A673 (cell line): ENCODE measurements at regions of chr2 and their contacts with region 1.

Region 1: DNA sequence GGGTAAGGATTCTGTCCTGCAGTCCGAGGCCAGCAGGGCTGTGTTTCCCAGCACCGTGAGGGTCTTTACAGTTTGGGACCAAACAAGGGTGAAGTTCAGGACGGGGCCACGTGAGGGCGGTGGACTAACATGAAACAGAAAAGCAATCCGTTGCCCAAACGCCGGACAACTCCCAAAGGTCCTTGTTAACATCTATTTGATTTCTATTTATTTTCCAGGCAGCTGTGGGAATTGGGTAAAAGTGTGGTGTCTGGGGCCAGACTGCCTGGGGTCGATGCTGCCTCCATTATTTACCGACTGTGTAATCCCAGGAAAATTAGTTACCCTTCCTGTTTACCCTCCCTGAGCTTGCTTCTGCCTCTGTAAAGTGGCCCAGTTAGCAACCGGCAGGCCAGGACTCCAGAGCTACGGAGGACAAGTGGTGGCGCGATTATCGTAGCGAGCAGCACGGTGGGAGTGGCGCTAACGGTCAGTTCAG is 66.3 kb upstream of the TCF7L1 start:
- DNase-seq: peak; percentile 82
- H3K4me3 ChIP-seq: peak overlapping the region; percentile 14
- H3K27ac ChIP-seq: no peak overlapping the region
- H3K4me1 ChIP-seq: no peaks in the 10 kb centered on the region
- H3K27me3 ChIP-seq: no peaks in the 10 kb centered on the region
- CTCF ChIP-seq: peak; percentile 79

Region 2: DNA sequence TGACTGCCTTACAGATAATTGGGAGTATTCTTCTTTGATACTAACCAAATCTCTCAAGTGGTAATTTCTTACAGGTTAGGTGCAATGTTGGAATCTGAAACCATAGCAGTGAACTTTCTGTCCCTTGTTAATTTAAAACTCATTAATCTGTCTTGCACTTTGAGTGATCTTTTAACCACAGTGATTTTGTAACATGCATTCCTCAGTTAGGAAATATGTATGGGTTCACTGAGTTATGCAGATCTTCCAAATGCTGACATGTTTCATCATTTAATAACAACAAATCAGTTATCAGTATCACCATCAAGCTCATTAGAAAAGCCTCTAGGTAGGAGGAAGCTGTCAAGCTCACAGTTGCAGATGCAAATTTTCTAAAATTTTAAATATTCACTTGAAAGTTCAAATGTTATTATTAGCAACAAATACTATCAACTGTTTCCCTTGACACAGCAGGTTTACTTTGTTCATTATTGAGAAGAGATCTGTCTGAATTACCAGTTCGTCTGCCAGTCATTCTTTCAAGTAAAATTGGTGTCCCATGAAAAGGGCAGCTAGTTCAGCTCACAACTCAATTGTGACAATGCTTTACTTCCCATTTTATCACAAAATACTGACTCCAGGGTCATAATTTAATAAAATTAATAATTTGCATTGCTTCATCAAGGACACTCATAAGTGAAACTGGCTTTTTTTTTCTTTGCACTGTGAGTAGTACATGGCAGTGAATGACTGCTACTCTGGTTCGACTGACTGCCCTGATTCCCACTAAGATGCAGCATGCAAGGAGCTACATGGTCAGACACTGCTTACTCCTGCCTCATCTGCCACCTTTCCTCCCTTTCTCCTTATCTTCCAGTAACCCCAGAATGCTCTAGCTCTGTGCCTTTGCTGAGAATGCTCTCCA is 639.4 kb before region 1 on chr2:
- CTCF ChIA-PET with region 1: no interaction called
- POLR2A ChIA-PET with region 1: no interaction called
- intact Hi-C with region 1: no loop called
- DNase-seq: no peak
- H3K4me3 ChIP-seq: no peak overlapping the region
- H3K27ac ChIP-seq: no peak overlapping the region
- H3K4me1 ChIP-seq: no peaks in the 10 kb centered on the region
- H3K27me3 ChIP-seq: no peaks in the 10 kb centered on the region
- CTCF ChIP-seq: no peak

Region 3: GRCh38 chr2:85288244-85288725 is 221.4 kb after region 1 on chr2:
- CTCF ChIA-PET with region 1: interaction called, 15 read pairs
- POLR2A ChIA-PET with region 1: no interaction called
- intact Hi-C with region 1: loop called (anchors 1 kb)
- DNase-seq: no peak
- H3K4me3 ChIP-seq: no peak overlapping the region
- H3K27ac ChIP-seq: peak overlapping the region; percentile 11
- H3K4me1 ChIP-seq: peaks cover 12% of the 10 kb centered on the region
- H3K27me3 ChIP-seq: no peaks in the 10 kb centered on the region
- CTCF ChIP-seq: no peak

Region 4: DNA sequence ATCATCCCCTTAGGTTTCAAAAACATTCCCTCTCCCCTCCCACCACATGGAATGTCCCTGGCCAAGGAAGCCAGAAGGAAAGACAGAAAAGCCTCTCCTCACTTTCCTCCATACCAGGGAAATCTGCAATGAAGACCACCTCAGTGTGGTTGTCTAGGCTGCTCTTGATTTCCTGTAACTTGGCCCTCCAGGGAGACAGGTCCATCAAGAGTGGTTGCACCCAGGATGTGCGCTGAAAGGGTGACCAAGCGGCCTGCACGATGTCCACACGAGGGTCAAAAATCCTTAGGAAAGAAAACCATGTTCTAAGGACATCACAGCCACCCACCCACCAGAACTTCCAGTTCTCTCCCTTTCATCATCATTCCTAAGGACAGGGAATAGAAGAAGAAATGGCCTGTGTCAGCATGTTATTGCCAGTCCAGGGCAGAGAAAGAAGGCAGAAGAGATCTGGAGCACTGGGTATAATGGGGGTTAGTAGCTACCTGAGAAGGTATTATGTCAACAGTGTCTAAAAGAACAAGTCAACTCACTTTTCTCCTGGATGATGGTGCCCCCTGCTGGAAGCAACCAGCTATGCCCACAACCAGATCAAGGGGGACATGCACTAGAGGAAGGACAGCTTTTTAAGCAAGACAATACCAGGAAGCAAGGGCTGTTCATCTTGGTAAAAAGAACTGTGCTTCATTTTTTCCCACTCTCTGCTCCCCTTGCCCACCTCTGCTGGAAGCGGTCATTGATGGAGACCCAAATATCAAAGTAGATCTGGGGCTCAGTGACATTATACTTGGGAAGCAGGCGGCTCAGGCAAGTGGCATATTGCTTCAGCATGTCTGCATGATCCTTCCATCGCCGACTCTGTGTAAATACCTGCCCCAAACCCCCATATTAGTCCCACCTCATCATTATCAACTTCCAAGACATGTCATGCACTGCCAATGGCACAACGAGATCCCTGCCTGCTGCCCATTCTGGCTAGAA is 485.1 kb after region 1 on chr2:
- CTCF ChIA-PET with region 1: no interaction called
- POLR2A ChIA-PET with region 1: no interaction called
- intact Hi-C with region 1: loop called (anchors 10 kb)
- DNase-seq: peak; percentile 83
- H3K4me3 ChIP-seq: no peak overlapping the region
- H3K27ac ChIP-seq: no peak overlapping the region
- H3K4me1 ChIP-seq: no peaks in the 10 kb centered on the region
- H3K27me3 ChIP-seq: no peaks in the 10 kb centered on the region
- CTCF ChIP-seq: peak; percentile 90